Sciatic nerve (tissue), 2 donors: ENCODE measurements at regions of chr6 and their contacts with region 1.

Region 1: DNA sequence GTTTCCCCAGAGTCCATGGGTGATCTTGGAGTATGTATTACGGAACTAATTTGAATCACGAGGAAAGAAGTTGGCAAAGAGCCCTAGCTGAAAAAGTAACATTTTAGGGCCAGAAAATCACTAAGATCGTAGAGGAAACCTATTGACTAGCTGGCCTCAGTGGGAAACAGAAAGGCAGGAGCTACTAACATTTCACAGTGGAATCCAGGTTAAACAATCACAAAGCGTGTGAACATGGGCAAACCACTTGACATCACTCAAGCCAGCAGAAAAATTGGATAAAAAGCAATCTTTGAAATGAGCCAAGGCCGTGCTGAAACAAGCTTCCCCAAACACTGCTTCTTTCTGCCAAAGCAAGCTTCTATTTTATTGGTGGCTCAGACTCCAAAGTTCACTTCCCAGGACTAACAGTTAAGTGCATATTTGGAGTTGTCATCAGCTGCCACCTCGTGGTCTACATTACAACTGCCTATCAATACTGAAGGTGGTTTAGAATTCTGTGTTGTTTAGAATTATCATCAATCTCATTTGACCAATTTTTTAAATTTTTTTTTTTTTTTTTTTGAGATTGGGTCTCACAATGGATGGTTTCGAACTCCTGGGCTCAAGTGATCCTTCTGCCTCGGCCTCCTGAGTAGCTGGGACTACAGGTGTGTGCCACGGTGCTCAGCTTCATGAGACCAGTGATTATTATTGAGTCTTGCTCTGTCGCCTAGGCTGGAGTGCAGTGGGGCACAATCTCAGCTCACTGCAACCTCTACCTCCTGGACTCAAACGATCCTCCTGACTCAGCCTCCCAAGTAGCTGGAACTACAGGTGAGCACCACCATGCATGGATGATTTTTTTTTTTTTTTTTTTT is 10.6 kb downstream of the RPS10 start:
- DNase-seq: peak; percentile 72
- ATAC-seq: peak; percentile 95

Region 2: DNA sequence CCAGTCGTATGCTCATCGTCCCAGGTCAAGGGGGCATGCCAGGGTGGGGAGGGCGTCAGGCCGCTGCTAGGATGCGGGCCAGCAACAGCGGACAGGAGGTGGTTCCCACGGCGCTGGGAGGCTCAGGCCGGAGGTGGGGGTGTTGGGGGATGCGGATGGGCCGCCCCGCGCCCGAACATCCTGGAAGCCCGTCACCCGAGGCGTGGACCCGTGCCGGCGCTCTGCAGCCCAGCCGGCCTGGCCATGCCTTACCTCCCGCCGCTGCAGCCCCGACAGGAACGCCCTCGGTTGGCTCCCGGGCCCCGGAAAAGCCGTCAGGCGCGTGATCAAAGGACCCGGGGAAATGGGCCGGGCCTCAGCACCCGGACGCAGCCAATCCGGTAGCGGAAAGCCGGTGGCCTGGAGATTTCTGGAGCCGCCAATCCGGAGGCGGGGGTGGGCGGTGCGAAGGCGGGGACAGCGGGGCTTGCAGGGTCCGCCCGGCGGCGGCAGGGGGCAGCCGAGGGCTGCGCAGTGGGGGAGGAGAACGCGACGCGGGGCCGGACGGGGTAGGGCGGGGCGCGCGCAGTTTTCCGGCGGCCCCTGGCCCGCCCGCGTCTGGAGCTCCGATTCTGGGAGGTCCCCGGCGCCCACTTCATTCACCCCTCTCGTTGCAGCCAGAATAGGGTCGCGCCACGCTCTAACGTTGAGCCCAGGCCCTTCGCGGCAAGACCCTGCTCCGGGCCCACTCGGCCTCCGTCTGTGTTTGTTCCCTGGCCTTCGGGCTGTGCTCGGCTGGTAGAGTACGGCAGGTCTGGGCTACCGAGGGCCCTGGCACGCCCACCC is 166.3 kb before region 1 on chr6 and contains the start of gene SMIM29:
- intact Hi-C with region 1: loop called (anchors 2 kb)
- DNase-seq: peak; percentile 99
- ATAC-seq: peak; percentile 93
- total RNA-seq, gene SMIM29: 31.6 TPM